ENCODE measurements at regions of chr10 and their contacts with region 1.

Region 1: GRCh38 chr10:98045785-98046389 is 15.5 kb upstream of the CRTAC1 start:
- DNase-seq: peak; percentile 52
- ATAC-seq: peak; percentile 85
- H3K4me3 ChIP-seq: no peak overlapping the region
- H3K27ac ChIP-seq: no peak overlapping the region
- H3K4me1 ChIP-seq: no peaks in the 10 kb centered on the region
- H3K27me3 ChIP-seq: peaks cover 0 to 19% of the 10 kb centered on the region in 2 experiments; a peak in 3 of 5 replicates
- CTCF ChIP-seq: peak; percentile 80
- EP300 ChIP-seq: no peak
- POLR2A ChIP-seq: no peak
- RAD21 ChIP-seq: no peak

Region 2: DNA sequence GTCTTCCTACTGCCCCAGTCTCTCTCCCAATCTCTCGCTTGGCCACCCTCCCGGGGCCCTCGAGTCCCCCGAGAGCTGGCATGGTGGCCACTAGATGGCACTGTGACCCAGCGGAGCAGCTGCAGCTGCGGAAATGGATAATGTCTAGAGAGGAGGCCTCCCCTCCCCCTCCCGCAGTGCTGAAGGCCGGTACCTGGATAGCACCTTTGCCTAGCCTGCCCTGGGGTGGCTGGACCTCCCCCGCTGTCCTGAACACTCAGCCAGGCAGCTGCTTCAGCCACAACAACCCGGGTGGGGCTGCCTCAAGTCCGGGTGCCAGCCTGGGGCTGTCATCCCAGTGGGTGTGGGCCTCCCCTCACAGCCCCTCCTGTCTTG is 131.1 kb before region 1 on chr10:
- CTCF ChIA-PET with region 1: interaction called, 39 read pairs
- POLR2A ChIA-PET with region 1: no interaction called
- in situ Hi-C with region 1: loop called (anchors 5 kb)
- intact Hi-C with region 1: loop called (anchors 1 kb)
- DNase-seq: peak; percentile 29
- ATAC-seq: peak; percentile 95
- H3K4me3 ChIP-seq: no peak overlapping the region
- H3K27ac ChIP-seq: no peak overlapping the region
- H3K4me1 ChIP-seq: no peaks in the 10 kb centered on the region
- H3K27me3 ChIP-seq: peaks cover 4 to 19% of the 10 kb centered on the region in 2 experiments; a peak in 2 of 5 replicates
- CTCF ChIP-seq: peak; percentile 94
- EP300 ChIP-seq: no peak
- POLR2A ChIP-seq: no peak
- RAD21 ChIP-seq: peak; percentile 92

Region 3: DNA sequence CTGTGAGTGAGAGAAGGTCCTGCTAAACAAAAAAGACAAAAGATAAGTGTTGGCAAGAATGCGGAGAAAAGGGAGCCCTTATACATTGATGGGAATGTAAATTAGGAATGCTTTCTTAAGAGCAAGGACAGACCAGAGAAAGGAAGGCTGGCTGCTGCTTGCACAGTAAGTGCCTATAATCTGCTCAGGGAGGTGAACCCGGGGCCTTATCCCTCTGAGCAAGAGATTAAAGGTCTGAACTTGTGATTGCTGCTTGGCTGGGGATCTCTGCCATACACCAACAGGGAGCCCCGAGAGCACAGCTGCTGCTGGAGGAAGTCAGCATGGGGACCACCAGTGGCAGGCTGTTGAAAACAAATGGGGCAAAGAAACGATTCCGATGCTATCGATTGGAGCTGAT is 16.5 kb after region 1 on chr10:
- CTCF ChIA-PET with region 1: no interaction called
- POLR2A ChIA-PET with region 1: no interaction called
- in situ Hi-C with region 1: no loop called
- intact Hi-C with region 1: no loop called
- DNase-seq: no peak
- ATAC-seq: no peak
- H3K4me3 ChIP-seq: no peak overlapping the region
- H3K27ac ChIP-seq: no peak overlapping the region
- H3K4me1 ChIP-seq: no peaks in the 10 kb centered on the region
- H3K27me3 ChIP-seq: no peaks in the 10 kb centered on the region; a peak in 1 of 5 replicates
- CTCF ChIP-seq: no peak
- EP300 ChIP-seq: no peak
- POLR2A ChIP-seq: no peak
- RAD21 ChIP-seq: no peak

Region 4: GRCh38 chr10:98195120-98195519 is 149.2 kb after region 1 on chr10:
- CTCF ChIA-PET with region 1: no interaction called
- POLR2A ChIA-PET with region 1: no interaction called
- in situ Hi-C with region 1: no loop called
- intact Hi-C with region 1: no loop called
- DNase-seq: no peak
- ATAC-seq: no peak
- H3K4me3 ChIP-seq: no peak overlapping the region
- H3K27ac ChIP-seq: no peak overlapping the region
- H3K4me1 ChIP-seq: no peaks in the 10 kb centered on the region; the same call in 1 of the 2 replicates
- H3K27me3 ChIP-seq: no peaks in the 10 kb centered on the region
- CTCF ChIP-seq: no peak
- EP300 ChIP-seq: no peak
- POLR2A ChIP-seq: no peak
- RAD21 ChIP-seq: no peak